ENCODE measurements at regions of chr20 and their contacts with region 1.

Region 1: DNA sequence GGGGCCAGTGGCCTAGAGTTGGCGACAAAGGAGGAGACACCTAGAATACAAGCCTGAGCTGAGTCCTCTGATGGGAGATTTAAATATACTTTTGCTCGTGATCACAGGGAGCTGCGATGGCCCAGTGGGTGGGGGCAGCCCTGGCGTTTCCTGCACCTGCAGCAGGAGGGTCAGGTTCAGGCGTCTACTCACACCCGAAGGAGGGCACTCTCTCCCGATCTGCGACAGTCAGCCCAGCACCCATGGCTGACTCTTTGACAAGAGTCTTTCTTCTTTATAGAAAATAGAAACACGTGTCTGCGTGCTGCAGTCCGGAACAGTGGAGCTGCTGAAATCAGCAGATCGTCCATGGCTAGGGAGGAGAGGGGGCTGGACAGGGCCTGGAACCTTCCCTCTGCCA is 338.2 kb downstream of the CDH4 start:
- DNase-seq: no peak
- H3K4me3 ChIP-seq: no peak overlapping the region
- H3K27ac ChIP-seq: no peak overlapping the region
- H3K4me1 ChIP-seq: peaks cover 0 to 21% (median 14%) of the 10 kb centered on the region in 4 donors
- H3K27me3 ChIP-seq: peaks cover 2 to 64% (median 4%) of the 10 kb centered on the region in 3 donors
- CTCF ChIP-seq: no peak
- EP300 ChIP-seq: no peak
- POLR2A ChIP-seq: no peak

Region 2: DNA sequence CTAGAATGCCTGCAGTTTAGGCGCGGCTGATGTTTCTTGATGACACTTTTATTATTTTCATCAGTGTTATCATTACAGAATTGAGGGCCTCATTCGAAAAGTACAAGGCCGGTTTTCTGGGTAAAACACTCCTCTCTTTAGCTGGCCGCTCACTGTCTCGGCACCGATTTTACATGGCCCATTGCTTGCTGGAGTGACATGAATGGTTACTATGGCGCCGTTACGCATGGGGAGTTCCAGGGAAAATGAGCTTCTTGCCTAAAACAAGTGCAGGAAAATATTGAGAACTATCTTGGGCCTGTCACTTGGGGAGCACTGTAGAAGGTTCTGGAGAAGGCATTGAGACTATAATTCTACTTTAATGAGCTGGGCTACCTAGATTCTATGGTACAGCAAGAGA is 20.4 kb before region 1 on chr20:
- intact Hi-C with region 1: loop called (anchors 1 kb)
- DNase-seq: no peak
- H3K4me3 ChIP-seq: no peak overlapping the region
- H3K27ac ChIP-seq: no peak overlapping the region
- H3K4me1 ChIP-seq: no peaks in the 10 kb centered on the region
- H3K27me3 ChIP-seq: peaks cover 0 to 58% (median 4%) of the 10 kb centered on the region in 3 donors
- CTCF ChIP-seq: no peak
- EP300 ChIP-seq: no peak
- POLR2A ChIP-seq: no peak